Activated T-helper 2 cell treated with anti-CD3 and anti-CD28 coated beads, Interferon-gamma antibody, Interleukin-2, Interleukin-4, amounts not matched to agents 10 μg/mL and 5 μg/mL and 100 μg/mL, durations not matched to agents 14 hours and 24 hours and 36 hours (primary cell): ENCODE measurements at regions of chr7 and their contacts with region 1.

Region 1: DNA sequence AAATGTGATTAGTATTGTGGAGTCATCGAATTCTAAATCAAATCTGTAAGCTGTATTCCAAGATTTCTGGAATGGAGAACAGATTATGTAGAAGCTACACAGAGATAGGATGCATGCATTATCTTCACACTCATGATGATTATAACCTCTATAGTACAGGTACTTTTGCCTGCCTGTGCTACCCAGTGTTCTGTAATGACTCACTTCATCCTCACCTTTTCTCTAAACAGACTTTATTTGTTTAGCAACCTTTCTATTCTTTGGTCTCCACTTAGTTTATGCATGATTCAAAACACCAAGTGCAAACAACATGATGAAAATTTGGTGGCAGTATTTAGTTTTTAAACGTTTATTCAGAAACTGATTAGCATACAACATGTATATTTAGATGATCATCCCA is 68.4 kb upstream of the PRPS1L1 start:
- DNase-seq: no peak
- H3K4me3 Mint-ChIP-seq: no peak overlapping the region
- H3K27ac Mint-ChIP-seq: no peak overlapping the region
- H3K4me1 Mint-ChIP-seq: no peaks in the 10 kb centered on the region
- H3K27me3 Mint-ChIP-seq: peaks cover 4% of the 10 kb centered on the region

Region 2: GRCh38 chr7:18064242-18064838 is 31.7 kb before region 1 on chr7:
- intact Hi-C with region 1: loop called (anchors 5 kb)
- DNase-seq: no peak
- H3K4me3 Mint-ChIP-seq: no peak overlapping the region
- H3K27ac Mint-ChIP-seq: no peak overlapping the region
- H3K4me1 Mint-ChIP-seq: no peaks in the 10 kb centered on the region
- H3K27me3 Mint-ChIP-seq: no peaks in the 10 kb centered on the region